ENCODE measurements at regions of chr4 and their contacts with region 1.

Region 1: DNA sequence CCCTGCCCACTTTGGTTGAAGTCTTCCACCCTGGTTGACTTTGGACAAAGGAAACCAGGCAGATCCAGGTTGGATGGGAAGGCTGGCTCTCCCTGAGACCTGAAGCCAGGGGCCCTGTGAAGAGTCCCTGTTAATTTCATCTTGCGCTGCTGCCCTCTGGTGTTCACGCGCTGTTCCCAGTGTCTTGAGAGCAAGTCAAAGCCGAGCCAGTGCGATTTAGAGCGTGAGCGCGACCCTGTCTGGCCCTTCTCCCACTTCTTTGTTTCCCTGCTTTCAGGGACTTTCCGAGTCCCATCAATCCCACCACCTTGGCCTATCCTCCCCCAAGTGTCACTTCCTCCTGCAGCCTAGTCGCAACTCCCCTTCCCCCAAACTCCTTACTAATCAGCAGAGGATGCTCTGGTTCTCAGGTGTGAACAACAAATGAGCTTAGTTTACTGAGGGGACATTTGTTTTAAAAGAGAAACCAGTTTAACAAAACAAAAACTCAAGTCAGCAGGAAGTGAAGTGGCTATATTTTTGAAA is 25.8 kb upstream of the CHRNA9 start:
- DNase-seq: peak; percentile 72 to 95 (median 88)
- ATAC-seq: peak; percentile 62 to 69 (median 68)
- H3K4me3 ChIP-seq: peak overlapping the region; percentile 30 to 45
- H3K4me3 Mint-ChIP-seq: peak overlapping the region; percentile 66 to 77 (median 71)
- H3K27ac ChIP-seq: peak overlapping the region; percentile 95
- H3K27ac Mint-ChIP-seq: peak overlapping the region; percentile 97 to 99
- H3K4me1 ChIP-seq: peaks cover 65 to 81% of the 10 kb centered on the region in 2 experiments
- H3K4me1 Mint-ChIP-seq: peaks cover 84 to 95% (median 90%) of the 10 kb centered on the region in 3 donors
- H3K27me3 ChIP-seq: no peaks in the 10 kb centered on the region
- H3K27me3 Mint-ChIP-seq: no peaks in the 10 kb centered on the region

Region 2: GRCh38 chr4:40193016-40193571 is 116.2 kb before region 1 on chr4:
- CTCF ChIA-PET with region 1: interaction called, 4 to 16 read pairs
- POLR2A ChIA-PET with region 1: interaction called, 10 to 12 read pairs
- DNase-seq: peak in 28 of 35 experiments; percentile 13 to 73 (median 45)
- ATAC-seq: peak; percentile 11 to 48 (median 46)
- H3K4me3 ChIP-seq: peak overlapping the region; percentile 33 to 43
- H3K4me3 Mint-ChIP-seq: peak overlapping the region; percentile 75 to 98 (median 96)
- H3K27ac ChIP-seq: peak overlapping the region; percentile 99
- H3K27ac Mint-ChIP-seq: peak overlapping the region; percentile 95 to 96
- H3K4me1 ChIP-seq: peaks cover 44 to 60% of the 10 kb centered on the region in 2 experiments
- H3K4me1 Mint-ChIP-seq: peaks cover 73 to 82% (median 75%) of the 10 kb centered on the region in 3 donors
- H3K27me3 ChIP-seq: no peaks in the 10 kb centered on the region
- H3K27me3 Mint-ChIP-seq: no peaks in the 10 kb centered on the region

Region 3: GRCh38 chr4:40205259-40206198 is 103.8 kb before region 1 on chr4:
- CTCF ChIA-PET with region 1: interaction called, 5 to 46 read pairs
- POLR2A ChIA-PET with region 1: interaction called, 5 to 13 read pairs
- DNase-seq: peak in 2 of 35 experiments; percentile 48 to 63
- ATAC-seq: peak; percentile 34 to 50 (median 46)
- H3K4me3 ChIP-seq: peak overlapping the region; percentile 87 to 96
- H3K4me3 Mint-ChIP-seq: peak overlapping the region; percentile 96 to 99 (median 98)
- H3K27ac ChIP-seq: peak overlapping the region; percentile 99
- H3K27ac Mint-ChIP-seq: peak overlapping the region; percentile 93 to 96
- H3K4me1 ChIP-seq: peaks cover 55 to 58% of the 10 kb centered on the region in 2 experiments
- H3K4me1 Mint-ChIP-seq: peaks cover 62 to 82% (median 76%) of the 10 kb centered on the region in 3 donors
- H3K27me3 ChIP-seq: no peaks in the 10 kb centered on the region
- H3K27me3 Mint-ChIP-seq: no peaks in the 10 kb centered on the region

Region 4: DNA sequence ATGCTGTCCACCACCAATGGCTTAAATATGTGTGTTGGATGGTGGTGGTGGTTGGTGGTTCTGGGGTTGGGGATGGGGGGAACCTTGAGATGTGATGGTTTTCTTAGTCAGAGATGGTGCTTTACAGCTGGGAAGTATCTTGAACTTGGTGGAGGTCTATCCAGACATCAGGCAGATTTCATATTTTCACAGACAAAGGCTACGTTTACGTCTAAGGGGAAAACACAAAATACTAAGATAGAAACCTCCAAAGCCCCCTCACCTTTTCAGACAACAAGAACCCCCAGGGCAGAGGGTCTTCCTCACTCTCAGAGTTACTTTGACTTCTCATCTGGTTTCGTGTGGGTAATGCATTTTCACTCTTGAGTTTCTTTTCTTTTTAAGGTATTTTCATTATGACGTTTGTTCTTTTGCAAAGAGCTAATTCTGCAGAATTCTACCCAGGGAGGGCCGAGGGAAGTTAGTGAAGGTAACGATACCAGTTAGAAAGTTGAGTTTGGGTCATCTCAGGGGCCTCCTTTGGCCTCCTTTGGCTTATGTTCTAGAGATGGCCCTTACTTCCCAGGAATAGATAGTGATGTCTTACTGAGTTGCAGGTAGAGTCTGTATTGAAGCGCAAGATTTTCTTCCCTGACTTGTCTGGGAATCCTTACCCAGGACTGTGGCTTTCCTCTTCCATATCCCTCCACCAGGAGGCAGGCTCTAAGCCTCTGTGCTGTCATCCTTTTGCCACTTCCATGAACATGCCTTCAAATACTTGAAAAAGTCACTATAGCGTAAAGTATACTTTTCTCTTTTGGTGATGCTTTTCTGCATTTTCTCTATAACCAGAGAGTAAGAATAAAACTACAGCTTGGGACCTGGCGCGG is 80.6 kb before region 1 on chr4:
- CTCF ChIA-PET with region 1: interaction called, 5 to 21 read pairs
- POLR2A ChIA-PET with region 1: interaction called, 10 to 14 read pairs
- DNase-seq: peak in 1 of 35 experiments; percentile 52
- ATAC-seq: no peak
- H3K4me3 ChIP-seq: peak overlapping the region; percentile 15 to 19
- H3K4me3 Mint-ChIP-seq: peak overlapping the region; percentile 68 to 83 (median 76)
- H3K27ac ChIP-seq: peak overlapping the region; percentile 87
- H3K27ac Mint-ChIP-seq: peak overlapping the region; percentile 97 to 99
- H3K4me1 ChIP-seq: peaks cover 76 to 90% of the 10 kb centered on the region in 2 experiments
- H3K4me1 Mint-ChIP-seq: peaks cover 91 to 94% (median 91%) of the 10 kb centered on the region in 3 donors
- H3K27me3 ChIP-seq: no peaks in the 10 kb centered on the region
- H3K27me3 Mint-ChIP-seq: no peaks in the 10 kb centered on the region

Region 5: GRCh38 chr4:40283968-40284367 is 25.3 kb before region 1 on chr4:
- CTCF ChIA-PET with region 1: interaction called, 4 to 28 read pairs
- POLR2A ChIA-PET with region 1: interaction called, 3 to 7 read pairs
- DNase-seq: peak in 34 of 35 experiments; percentile 62 to 89 (median 74)
- ATAC-seq: peak; percentile 97 to 99 (median 98)
- H3K4me3 ChIP-seq: peak overlapping the region in 1 of 2 donors; percentile 5
- H3K4me3 Mint-ChIP-seq: peak overlapping the region in 2 of 3 donors; percentile 43 to 78
- H3K27ac ChIP-seq: peak overlapping the region; percentile 90
- H3K27ac Mint-ChIP-seq: peak overlapping the region; percentile 89 to 94
- H3K4me1 ChIP-seq: peaks cover 20 to 58% of the 10 kb centered on the region in 2 experiments
- H3K4me1 Mint-ChIP-seq: peaks cover 57 to 73% (median 70%) of the 10 kb centered on the region in 3 donors
- H3K27me3 ChIP-seq: no peaks in the 10 kb centered on the region
- H3K27me3 Mint-ChIP-seq: no peaks in the 10 kb centered on the region

Region 6: DNA sequence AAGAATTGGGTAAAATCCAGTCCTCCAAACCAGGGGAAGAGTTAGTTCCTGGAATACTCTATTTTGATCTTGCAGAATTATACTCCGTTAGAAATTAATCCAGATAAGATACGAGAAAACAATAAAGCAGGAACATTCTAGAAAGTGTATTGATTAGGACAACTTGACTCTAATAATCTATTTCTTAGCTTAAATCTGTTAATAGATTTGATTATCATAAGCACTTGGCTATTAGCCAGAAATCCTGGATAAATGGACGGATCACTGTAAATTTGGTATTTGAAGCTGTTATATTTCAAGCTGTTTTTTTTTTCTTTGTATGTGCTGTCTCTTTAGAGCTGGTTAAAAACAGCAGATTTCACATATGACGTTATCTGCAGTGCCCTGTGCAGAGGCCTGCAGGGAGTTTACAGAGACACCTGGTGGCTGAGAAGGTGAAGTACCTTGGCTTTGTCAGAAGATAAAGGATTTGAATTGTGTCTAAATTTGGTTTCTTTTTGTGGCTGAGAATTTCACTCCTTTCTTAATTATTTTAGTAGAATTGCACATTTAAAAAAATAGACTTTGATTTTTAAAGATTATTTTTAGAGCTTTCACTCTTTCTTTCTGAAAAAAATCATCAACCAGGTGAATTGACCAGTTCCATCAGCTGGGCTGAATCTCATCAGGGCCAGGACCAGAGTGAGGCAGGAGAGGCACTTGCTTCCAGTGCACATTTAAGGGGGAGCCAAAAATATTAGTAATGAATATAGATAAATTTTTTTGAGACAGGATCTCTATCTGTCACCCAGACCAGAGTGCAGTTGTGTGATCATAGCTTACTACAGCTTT is 16.1 kb after region 1 on chr4:
- CTCF ChIA-PET with region 1: interaction called, 5 to 35 read pairs
- POLR2A ChIA-PET with region 1: interaction called in 1 of 2 experiments, 3 read pairs
- DNase-seq: peak in 33 of 35 experiments; percentile 43 to 87 (median 65)
- ATAC-seq: peak; percentile 96 to 98 (median 97)
- H3K4me3 ChIP-seq: no peak overlapping the region
- H3K4me3 Mint-ChIP-seq: no peak overlapping the region
- H3K27ac ChIP-seq: no peak overlapping the region
- H3K27ac Mint-ChIP-seq: peak overlapping the region; percentile 9 to 14
- H3K4me1 ChIP-seq: peaks cover 4 to 9% of the 10 kb centered on the region in 2 experiments
- H3K4me1 Mint-ChIP-seq: peaks cover 21 to 31% (median 21%) of the 10 kb centered on the region in 3 donors
- H3K27me3 ChIP-seq: no peaks in the 10 kb centered on the region
- H3K27me3 Mint-ChIP-seq: peaks cover 0 to 4% of the 10 kb centered on the region in 2 donors

Region 7: GRCh38 chr4:41360214-41360920 is 1051.1 kb after region 1 on chr4:
- CTCF ChIA-PET with region 1: no interaction called
- POLR2A ChIA-PET with region 1: no interaction called
- DNase-seq: no peak
- ATAC-seq: no peak
- H3K4me3 ChIP-seq: peak overlapping the region in 1 of 2 donors; percentile 6
- H3K4me3 Mint-ChIP-seq: no peak overlapping the region
- H3K27ac ChIP-seq: no peak overlapping the region
- H3K27ac Mint-ChIP-seq: no peak overlapping the region
- H3K4me1 ChIP-seq: no peaks in the 10 kb centered on the region
- H3K4me1 Mint-ChIP-seq: peaks cover 0 to 3% (median 0%) of the 10 kb centered on the region in 3 donors
- H3K27me3 ChIP-seq: peaks cover 4 to 31% of the 10 kb centered on the region in 2 experiments
- H3K27me3 Mint-ChIP-seq: peaks cover 33 to 48% of the 10 kb centered on the region in 2 donors